ENCODE measurements at regions of chr12 and their contacts with region 1.

Region 1: DNA sequence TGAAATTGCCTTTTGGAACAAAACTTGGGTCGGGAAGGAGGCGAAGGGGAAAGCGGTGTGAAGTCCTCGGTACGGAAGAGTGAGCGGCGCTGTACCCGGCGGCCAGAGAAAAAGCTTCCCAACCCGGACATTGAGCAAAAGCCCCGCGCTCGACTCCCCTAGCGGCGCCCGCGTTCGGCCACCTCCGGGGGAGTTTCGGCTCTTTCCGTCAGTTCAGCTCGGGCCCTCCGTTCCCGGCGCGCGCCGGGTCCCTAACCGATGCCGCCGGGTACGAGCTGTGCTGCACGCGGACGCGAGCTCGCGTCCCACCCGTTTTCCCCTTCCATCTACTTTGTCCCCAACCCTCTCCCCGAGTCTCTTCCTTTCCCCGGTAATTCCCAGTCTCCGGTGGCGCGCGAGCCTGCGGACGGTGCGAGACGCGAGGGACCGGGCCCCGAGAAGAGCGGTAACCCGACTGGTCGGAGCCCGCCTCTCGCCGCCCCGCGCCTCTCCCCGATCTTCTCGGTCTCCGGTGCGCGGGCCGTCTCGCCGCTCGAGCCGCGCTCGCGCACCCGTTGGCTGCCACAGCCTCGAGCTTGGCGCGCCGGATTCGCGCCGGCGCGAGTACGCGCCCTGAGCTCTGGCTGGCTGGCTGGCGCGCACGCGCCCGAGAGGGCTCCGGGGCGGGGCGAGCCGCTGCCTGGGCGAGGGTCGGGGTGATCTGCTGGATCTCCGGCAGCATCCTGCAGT is 446 bp upstream of the SPATS2 start:
- DNase-seq: peak; percentile 93

Region 2: DNA sequence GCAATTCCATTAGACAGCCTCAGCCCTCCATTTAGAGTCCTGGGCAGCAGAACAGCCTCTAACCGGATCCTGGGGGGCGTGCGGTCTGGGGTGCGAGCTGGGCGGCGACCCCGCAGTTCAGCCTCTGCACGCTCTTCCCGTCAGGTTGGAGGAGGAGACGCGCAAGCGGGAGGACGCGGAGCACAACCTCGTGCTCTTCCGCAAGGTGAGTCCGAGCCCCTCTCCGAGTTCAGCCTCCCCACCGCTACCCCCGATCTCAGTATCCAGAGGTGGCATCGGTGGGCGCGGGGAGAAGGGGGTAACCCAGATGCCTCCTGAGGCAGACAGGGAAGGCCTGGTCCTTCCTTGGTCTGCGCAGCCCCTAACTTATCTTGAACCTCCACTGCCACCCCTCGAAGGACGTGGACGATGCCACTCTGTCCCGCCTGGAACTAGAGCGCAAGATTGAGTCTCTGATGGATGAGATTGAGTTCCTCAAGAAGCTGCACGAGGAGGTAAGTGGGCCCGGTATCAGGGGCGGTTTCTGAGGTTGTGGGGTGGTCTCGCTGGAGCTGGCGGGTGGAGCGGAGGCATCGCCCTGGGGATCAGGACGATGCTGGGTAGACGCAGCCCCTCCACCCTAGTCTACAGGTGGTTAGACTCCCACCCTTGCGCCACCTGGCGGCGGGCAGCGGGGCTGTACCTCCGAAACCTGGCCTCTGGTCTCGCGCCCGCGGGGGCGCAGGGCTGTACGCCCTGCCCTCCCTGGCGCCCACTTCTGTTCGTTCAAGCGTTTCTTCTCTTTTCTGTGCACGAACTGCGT is 70.6 kb before region 1 on chr12:
- CTCF ChIA-PET with region 1: no interaction called
- POLR2A ChIA-PET with region 1: interaction called, 15 read pairs
- DNase-seq: peak; percentile 88

Region 3: DNA sequence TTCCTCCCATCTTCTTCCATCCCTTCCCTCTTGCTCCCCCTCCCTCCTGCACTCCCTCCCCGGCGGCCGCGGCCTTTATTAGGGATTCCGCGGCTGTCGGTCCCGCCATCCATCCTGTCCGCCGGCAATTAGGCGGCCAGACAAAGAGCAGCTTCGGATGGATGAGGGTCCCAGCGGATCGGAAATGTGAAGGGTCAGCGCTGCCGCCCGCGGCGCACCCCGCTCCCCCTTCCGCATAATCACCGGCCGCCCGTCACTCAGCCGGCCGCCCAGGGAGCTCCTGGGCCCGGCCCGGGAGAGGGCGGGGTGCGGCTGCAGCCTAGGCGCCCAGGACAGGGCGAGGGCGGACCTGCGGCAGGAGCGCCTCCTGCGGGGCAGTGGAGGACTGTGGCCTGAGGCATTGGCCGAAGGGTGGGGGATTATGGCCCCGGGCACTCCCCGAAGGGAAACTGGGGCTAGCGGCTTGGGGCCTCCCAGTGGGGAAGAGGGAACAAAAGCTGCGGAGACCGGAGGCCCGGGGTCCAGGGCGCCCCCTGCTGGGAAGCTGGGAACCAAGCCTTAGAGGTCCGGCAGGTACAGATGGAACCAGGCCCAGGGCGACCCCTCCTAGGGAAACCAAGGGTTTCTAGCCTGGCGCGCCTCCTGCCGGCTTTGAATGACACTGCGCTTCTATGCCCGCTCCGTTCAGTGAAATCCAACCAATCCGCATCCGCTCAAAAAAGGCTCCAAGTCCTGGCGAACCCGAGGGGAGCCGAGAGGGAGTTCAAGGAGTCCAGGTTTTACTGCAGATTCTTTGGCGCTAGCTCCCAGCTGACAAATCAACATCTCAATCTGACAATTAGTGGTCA is 24.5 kb before region 1 on chr12:
- CTCF ChIA-PET with region 1: interaction called, 17 read pairs
- POLR2A ChIA-PET with region 1: interaction called, 23 read pairs
- DNase-seq: peak; percentile 88

Region 4: DNA sequence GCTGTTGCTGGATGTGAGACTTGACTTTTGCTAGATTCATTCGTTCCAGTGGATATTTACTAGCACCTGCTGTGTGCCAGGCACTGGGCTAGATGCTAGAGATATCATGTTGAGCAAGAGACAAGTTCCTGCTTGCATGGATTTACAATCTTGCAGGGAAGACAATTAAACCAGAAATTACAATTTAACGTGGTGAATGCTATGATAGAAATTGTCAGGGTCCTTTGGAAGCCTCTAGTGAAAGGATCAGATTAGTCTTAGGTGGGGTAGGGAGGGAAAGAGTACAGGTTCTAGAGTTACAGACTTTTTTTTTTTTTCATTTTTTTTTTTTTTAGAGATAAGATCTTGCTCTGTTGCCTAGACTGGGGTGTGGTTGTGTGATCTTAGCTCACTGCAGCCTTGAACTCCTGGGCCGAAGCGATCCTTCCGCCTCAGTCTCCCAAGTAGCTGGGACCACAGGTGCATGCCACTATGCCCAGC is 37.2 kb after region 1 on chr12:
- CTCF ChIA-PET with region 1: no interaction called
- POLR2A ChIA-PET with region 1: interaction called, 13 read pairs
- DNase-seq: no peak

Region 5: GRCh38 chr12:49489720-49490119 is 122.9 kb after region 1 on chr12:
- CTCF ChIA-PET with region 1: no interaction called
- POLR2A ChIA-PET with region 1: interaction called, 10 read pairs
- DNase-seq: no peak

Region 6: GRCh38 chr12:49515266-49515665 is 148.4 kb after region 1 on chr12:
- CTCF ChIA-PET with region 1: interaction called, 8 read pairs
- POLR2A ChIA-PET with region 1: interaction called, 34 read pairs
- DNase-seq: no peak

Region 7: DNA sequence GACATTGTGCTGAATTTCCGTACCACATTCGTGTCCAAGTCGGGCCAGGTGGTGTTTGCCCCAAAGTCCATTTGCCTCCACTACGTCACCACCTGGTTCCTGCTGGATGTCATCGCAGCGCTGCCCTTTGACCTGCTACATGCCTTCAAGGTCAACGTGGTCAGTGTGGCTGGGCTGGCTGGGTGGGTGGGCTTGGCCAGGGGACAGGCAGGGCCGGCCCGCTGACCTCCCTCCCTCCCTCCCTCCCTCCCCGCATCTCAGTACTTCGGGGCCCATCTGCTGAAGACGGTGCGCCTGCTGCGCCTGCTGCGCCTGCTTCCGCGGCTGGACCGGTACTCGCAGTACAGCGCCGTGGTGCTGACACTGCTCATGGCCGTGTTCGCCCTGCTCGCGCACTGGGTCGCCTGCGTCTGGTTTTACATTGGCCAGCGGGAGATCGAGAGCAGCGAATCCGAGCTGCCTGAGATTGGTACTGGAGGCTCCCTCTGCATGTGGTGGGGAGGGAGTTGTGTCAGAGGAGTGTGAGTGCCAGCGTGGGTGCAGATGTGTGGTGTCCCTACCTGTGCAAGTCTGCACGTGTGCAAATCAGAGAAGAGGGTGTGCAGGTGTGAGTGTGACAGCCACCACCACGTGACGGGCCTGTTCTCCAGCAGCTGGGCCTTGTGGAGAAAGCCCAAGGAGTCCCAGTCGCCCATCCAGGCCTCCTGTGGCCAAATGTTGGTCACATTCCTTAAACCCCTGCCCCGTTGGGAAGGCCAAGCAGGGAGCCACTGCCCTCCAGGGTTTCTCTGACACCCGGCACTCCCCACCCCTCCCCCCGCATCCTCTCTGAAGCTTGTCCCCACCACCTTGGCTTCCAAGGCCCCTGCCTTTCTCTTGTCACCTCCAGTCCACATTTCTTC is 177.3 kb after region 1 on chr12:
- CTCF ChIA-PET with region 1: no interaction called
- POLR2A ChIA-PET with region 1: no interaction called
- DNase-seq: no peak

Region 8: DNA sequence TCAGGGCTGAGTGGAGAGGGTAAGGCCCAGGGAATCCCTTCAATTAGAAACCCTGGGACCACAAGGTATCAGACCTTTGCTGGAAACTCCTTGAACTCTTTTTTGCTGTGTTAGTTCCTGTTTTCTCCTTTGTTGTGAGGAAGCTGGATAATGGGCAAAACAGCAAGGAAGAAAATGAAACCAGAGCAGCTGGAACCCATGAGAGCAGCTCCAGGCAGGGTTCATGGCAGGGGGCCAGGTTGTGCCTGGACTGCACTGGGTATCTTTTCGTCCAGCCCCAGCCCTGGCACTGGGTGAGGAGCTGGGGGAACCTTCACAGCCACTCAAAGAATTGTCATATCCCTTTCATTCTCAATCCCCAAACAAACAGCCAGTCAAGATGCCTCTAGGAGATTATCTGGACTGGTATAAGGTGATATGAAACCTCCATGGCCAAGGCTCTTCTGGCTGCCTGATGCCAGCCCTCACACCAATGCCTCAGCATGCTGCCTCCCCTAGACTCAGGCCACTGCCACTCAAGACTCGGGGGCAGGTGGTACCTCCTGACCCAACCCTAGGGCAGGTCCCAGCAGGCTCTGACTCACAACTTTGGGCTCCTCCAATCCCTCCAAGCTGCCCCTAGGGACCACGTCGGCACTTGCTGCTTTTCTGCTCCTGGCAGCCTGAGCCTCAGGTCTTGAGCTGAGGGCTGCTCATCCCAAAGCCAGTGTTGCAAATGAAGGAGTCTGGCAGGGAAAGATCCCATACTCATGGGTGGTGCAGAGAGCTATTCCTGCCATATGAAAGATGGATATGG is 222.1 kb after region 1 on chr12:
- CTCF ChIA-PET with region 1: no interaction called
- POLR2A ChIA-PET with region 1: no interaction called
- DNase-seq: no peak